Dorsolateral prefrontal cortex (tissue), 120 donors: ENCODE measurements at regions of chr19 and their contacts with region 1.

Region 1: DNA sequence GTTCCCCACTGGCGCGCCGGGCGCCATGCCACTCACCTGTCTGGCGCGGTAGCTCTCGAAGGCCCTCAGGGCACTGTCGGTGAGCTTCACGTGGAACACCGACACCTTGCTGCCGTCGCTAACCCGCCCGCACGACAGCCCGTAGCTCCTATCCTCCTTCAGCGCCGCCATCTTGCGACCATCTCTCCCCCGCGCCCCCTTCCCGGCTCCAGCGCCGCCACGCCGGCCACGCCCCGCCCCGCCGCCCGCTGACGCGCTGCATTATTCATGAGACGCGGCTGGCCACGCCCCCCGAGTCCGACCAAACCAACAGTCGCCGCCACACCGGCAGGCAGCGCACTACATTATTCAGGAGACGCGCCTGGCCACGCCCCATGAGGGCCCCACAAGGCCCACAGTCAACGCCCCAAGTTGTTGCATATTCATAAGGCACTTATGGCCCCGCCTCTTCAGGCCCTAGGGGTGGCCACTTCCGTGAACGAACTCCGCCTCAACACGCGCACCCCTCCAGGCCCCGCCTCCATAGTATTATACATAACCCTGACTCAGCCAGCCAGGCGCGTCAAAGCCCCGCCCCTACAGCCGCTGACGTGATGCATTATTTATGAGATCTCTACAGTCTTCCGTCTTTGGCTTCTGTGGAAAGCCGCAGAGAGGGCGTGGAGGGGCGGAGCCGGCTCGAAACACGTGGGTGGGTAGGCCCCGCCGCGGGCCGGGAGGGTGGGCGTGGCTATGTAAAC is at the start of gene ELL:
- DNase-seq: peak; percentile 100
- H3K4me3 ChIP-seq: peak within 1 kb of the TSS; percentile 62 to 100 (median 98)
- H3K27ac ChIP-seq: peak within 1 kb of the TSS; percentile 9 to 98 (median 91)
- H3K27me3 ChIP-seq: no peaks in the 10 kb centered on the region
- CTCF ChIP-seq: peak in 28 of 56 donors; percentile 5 to 54 (median 20)
- total RNA-seq, gene ELL: 9.4 to 22.3 (median 15.4) TPM

Region 2: DNA sequence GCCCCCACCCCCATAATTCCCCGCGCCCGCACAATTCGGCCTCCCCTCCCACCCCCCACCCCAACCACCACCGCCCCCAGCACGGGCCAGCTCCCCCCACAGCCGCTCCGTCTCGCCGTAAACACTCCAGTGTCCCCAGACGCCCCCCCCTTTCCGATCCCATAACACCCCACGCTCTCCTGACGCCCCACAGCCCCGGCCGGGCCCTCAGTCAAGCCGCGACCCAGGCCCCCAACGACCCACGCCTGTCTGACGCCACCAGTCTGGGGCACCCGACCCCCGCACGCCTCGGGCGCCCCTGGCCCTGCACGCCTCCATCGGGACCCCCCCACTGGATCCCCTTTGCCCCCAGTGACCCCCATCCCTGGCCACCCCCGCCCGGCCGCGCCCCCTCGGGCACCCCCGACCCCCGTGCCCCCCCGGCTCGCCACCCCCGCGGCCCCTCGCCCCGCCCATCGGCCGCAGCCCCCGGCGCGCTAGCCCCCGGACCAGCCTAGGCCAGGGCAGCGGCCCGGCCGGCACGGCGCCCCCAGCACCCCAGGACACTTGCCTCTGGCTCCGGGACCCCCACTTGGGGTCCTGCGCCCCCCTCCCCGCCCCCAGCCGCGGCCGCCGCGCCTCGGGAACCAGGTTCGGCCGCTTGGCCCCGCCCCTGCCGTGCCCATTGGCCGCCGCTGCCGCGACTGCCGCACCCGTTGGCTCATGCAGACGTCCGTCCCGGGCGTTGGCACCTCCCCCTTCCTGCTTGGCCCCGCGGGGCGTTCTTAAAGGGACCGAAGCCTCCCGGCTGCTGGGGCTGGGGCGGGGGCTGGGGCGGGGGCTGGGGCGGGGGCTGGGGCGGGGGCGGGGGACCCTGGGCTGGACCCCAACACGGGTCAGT is 21.1 kb after region 1 on chr19 and contains the start of gene FKBP8:
- intact Hi-C with region 1: loop called in 1 of 2 experiments (anchors 1 kb)
- DNase-seq: peak; percentile 92 to 98 (median 96)
- H3K4me3 ChIP-seq: peak within 1 kb of the TSS; percentile 41 to 77 (median 63)
- H3K27ac ChIP-seq: peak within 1 kb of the TSS in 57 of 59 donors; percentile 73 to 95 (median 88)
- H3K27me3 ChIP-seq: no peaks in the 10 kb centered on the region
- CTCF ChIP-seq: peak in 1 of 56 donors; percentile 14
- total RNA-seq, gene FKBP8: 391 to 680 (median 539) TPM

Region 3: DNA sequence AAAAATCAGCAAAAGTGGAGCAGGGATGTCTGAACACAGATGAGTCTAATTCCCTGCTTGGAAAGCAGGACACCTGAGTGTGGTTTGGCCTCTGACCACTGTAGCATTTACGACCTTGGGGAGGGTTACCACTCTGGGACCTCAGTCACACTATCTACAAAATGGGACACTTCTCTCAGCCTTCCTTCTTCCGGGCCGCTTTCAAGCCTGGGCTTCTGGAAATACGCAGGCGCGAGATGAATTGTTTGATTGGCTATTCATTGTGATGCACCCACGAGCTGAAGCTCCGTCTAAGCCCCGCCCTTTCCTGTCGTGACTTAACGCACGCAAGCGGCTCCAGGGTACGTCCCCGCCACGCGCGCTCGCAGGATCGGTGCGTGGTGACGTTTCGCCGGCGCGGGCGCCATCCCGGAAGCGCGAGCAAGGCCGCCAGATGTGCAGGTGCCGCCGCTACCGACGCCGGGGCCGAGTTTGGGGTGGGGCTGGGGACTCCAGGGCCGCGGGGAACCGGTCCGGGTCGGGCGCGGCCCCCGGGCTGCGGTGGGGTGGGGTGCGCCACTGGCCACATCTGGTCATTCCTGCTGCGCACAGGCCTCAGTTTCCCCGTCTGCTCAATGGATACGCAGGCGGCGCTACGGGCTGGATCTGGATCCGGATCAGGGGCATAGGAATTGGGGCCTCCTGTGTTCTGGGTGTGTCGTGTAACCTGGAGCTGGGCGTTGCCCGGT is 35.6 kb after region 1 on chr19 and contains the start of gene KXD1:
- intact Hi-C with region 1: loop called (anchors 5 kb)
- DNase-seq: peak; percentile 94 to 99 (median 98)
- H3K4me3 ChIP-seq: peak within 1 kb of the TSS; percentile 80 to 99 (median 95)
- H3K27ac ChIP-seq: peak within 1 kb of the TSS; percentile 65 to 97 (median 90)
- H3K27me3 ChIP-seq: no peaks in the 10 kb centered on the region
- CTCF ChIP-seq: peak in 17 of 56 donors; percentile 5 to 48 (median 21)
- total RNA-seq, gene KXD1: 46.5 to 90.8 (median 64.8) TPM

Region 4: GRCh38 chr19:18636183-18636968 is 114.3 kb after region 1 on chr19:
- intact Hi-C with region 1: loop called in 1 of 2 experiments (anchors 2 kb)
- DNase-seq: peak; percentile 91 to 99 (median 96)
- H3K4me3 ChIP-seq: peak overlapping the region; percentile 43 to 93 (median 80)
- H3K27ac ChIP-seq: peak overlapping the region in 46 of 59 donors; percentile 18 to 93 (median 81)
- H3K27me3 ChIP-seq: no peaks in the 10 kb centered on the region
- CTCF ChIP-seq: no peak